Activated naive CD4-positive, alpha-beta T cell treated with anti-CD3 and anti-CD28 coated beads, Interleukin-2, amount 10 ng/mL, durations not matched to agents 7 days and 5 days (primary cell): ENCODE measurements at regions of chr3 and their contacts with region 1.

Region 1: DNA sequence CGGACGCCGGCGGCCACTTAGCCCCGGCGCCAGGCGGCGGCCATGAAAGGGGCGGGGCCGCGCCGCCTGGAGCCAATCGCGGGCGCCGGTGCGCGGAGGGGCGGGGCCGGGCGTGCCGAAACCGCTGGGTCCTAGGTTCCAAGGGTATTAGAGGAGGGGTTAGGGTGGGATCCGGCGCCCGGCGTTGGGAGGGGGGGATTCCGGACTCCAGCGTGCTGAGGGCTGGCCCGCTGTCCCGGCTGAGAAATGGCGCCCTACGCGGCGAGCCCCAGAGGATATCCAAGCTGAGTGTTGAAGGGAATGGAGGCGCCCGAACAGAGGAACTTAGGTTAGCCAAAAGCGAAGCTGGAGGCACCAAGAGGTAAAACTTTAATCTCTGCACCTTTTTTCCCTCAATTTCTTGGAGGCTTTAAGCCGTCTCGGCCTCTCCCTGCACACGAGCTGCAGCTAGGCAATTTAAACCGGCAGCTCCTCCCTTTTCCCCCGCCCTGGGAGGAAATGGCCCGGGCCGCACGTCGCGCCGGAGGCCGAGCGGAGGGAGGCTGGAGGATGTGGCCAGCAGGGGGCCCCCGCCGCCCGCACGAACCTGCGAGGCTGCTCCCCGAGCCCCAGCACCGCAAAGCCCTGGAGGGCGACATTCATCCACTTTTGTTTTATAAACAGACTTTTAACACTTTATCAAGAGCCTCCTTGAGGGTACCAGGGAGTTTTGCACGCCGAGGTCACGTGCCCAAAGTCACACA is at the start of gene XXYLT1:
- DNase-seq: peak; percentile 92
- H3K4me3 Mint-ChIP-seq: peak within 1 kb of the TSS; percentile 85
- H3K27ac Mint-ChIP-seq: peak within 1 kb of the TSS; percentile 91
- H3K4me1 Mint-ChIP-seq: peaks cover 29% of the 10 kb centered on the region
- H3K27me3 Mint-ChIP-seq: no peaks in the 10 kb centered on the region

Region 2: GRCh38 chr3:194682694-194683310 is 588.5 kb before region 1 on chr3:
- CTCF ChIA-PET with region 1: interaction called, 11 read pairs
- DNase-seq: peak; percentile 76
- H3K4me3 Mint-ChIP-seq: no peak overlapping the region
- H3K27ac Mint-ChIP-seq: no peak overlapping the region
- H3K4me1 Mint-ChIP-seq: peaks cover 42% of the 10 kb centered on the region
- H3K27me3 Mint-ChIP-seq: peaks cover 65% of the 10 kb centered on the region

Region 3: GRCh38 chr3:194696475-194697091 is 574.7 kb before region 1 on chr3:
- CTCF ChIA-PET with region 1: no interaction called
- DNase-seq: no peak
- H3K4me3 Mint-ChIP-seq: no peak overlapping the region
- H3K27ac Mint-ChIP-seq: no peak overlapping the region
- H3K4me1 Mint-ChIP-seq: no peaks in the 10 kb centered on the region
- H3K27me3 Mint-ChIP-seq: peaks cover 52% of the 10 kb centered on the region

Region 4: DNA sequence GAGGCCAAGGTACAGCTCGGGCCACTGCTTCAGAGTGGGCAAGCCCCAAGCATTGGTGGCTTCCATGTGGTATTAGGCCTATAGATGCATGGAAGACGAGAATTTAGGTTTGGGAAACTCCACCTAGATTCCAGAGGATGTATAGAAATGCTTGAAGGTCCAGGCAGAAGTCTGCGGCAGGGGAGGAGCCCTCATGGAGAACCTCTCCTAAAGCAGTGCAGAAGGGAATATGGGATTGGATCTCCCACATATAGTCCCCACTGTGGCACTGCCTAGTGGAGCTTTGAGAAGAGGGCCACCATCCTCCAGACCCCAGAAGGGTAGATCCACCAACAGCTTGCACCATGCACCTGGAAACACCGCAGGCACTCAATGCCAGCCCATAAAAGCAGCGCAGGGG is 47.8 kb after region 1 on chr3:
- CTCF ChIA-PET with region 1: no interaction called
- DNase-seq: no peak
- H3K4me3 Mint-ChIP-seq: no peak overlapping the region
- H3K27ac Mint-ChIP-seq: no peak overlapping the region
- H3K4me1 Mint-ChIP-seq: peaks cover 5% of the 10 kb centered on the region
- H3K27me3 Mint-ChIP-seq: no peaks in the 10 kb centered on the region

Region 5: DNA sequence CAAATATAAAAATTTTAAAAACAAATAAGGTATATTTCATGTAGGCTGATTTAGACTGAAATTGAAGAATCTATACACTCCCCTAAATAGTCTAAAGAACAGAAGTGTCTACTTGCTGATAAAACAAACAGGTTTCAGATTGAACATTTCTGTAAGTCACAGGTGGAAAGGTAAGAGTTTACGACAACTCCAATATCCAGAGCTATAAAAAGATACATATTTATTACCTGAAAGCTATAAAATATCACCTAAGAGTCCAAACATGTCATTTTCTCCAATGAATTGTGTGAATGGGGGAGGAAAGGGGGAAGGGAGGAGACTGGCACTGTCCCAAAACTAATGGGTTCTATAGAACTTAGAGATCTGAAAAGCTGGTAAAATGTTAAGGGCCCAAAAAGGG is 245.7 kb after region 1 on chr3:
- CTCF ChIA-PET with region 1: interaction called, 111 read pairs
- DNase-seq: no peak
- H3K4me3 Mint-ChIP-seq: no peak overlapping the region
- H3K27ac Mint-ChIP-seq: no peak overlapping the region
- H3K4me1 Mint-ChIP-seq: peaks cover 2% of the 10 kb centered on the region
- H3K27me3 Mint-ChIP-seq: no peaks in the 10 kb centered on the region

Region 6: GRCh38 chr3:195542698-195543499 is 271.6 kb after region 1 on chr3 and contains the start of gene PPP1R2:
- CTCF ChIA-PET with region 1: interaction called, 24 read pairs
- DNase-seq: peak; percentile 91
- H3K4me3 Mint-ChIP-seq: peak within 1 kb of the TSS; percentile 83
- H3K27ac Mint-ChIP-seq: peak within 1 kb of the TSS; percentile 96
- H3K4me1 Mint-ChIP-seq: peaks cover 73% of the 10 kb centered on the region
- H3K27me3 Mint-ChIP-seq: no peaks in the 10 kb centered on the region

Region 7: GRCh38 chr3:195558602-195559001 is 287.3 kb after region 1 on chr3:
- CTCF ChIA-PET with region 1: interaction called, 21 read pairs
- DNase-seq: peak; percentile 63
- H3K4me3 Mint-ChIP-seq: no peak overlapping the region
- H3K27ac Mint-ChIP-seq: no peak overlapping the region
- H3K4me1 Mint-ChIP-seq: peaks cover 35% of the 10 kb centered on the region
- H3K27me3 Mint-ChIP-seq: peaks cover 4% of the 10 kb centered on the region